A673 (cell line): ENCODE measurements at regions of chr3 and their contacts with region 1.

Region 1: GRCh38 chr3:177136741-177137140 is 60.5 kb downstream of the TBL1XR1 start:
- DNase-seq: no peak
- H3K4me3 ChIP-seq: no peak overlapping the region
- H3K27ac ChIP-seq: no peak overlapping the region
- H3K4me1 ChIP-seq: peaks cover 27% of the 10 kb centered on the region
- H3K27me3 ChIP-seq: no peaks in the 10 kb centered on the region
- CTCF ChIP-seq: no peak

Region 2: GRCh38 chr3:176755552-176755951 is 381.2 kb before region 1 on chr3:
- CTCF ChIA-PET with region 1: no interaction called
- POLR2A ChIA-PET with region 1: no interaction called
- intact Hi-C with region 1: no loop called
- DNase-seq: no peak
- H3K4me3 ChIP-seq: no peak overlapping the region
- H3K27ac ChIP-seq: no peak overlapping the region
- H3K4me1 ChIP-seq: no peaks in the 10 kb centered on the region
- H3K27me3 ChIP-seq: no peaks in the 10 kb centered on the region
- CTCF ChIP-seq: no peak

Region 3: DNA sequence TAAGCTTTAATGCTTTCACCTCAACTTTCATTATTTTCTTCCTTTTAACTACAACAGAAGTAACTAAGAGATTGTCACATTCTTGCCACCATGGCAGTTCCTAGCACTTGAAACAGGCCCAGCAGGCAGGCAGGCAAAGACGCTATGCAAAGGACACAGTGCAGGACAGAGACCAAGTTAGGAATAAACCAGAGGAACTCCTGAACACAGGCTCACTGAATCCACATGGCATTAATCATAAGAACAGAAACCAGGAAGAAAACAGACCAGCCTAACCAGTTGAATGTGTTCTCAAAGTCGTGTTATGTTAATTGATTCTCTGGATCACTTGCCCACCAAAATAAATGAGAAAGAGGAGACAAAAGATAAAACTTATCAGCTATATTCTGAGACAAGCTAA is 337.1 kb before region 1 on chr3:
- CTCF ChIA-PET with region 1: no interaction called
- POLR2A ChIA-PET with region 1: no interaction called
- intact Hi-C with region 1: no loop called
- DNase-seq: no peak
- H3K4me3 ChIP-seq: no peak overlapping the region
- H3K27ac ChIP-seq: no peak overlapping the region
- H3K4me1 ChIP-seq: peaks cover 23% of the 10 kb centered on the region
- H3K27me3 ChIP-seq: no peaks in the 10 kb centered on the region
- CTCF ChIP-seq: no peak

Region 4: DNA sequence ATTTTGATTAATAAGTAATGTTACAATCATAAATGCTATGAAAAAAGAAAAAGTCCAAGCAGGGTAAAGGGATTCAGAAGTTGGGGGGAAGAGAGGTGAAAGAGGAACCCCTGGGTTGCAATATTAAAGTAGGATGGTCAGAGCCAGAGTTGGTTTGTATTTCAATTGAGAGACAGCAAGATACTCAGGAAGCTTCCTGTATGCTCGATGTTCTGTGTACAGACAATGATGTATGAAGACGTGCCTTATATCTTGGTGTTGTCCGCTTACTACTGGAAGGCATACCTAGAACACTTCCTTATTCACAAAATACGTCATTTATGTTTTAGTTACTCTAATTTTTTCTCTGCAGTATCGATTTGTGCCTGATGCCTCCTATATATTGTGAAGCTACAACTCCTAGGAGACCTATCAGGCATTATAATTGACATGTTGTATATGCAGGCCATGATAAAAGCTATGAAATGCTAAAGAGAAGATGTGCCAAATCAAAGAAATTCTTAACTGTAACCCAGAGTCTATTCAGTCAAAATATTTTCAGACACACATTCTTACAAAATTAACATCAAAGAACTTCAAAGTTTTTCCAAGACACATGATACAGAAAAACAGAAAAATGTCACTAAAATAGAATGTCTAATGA is 26.9 kb before region 1 on chr3:
- CTCF ChIA-PET with region 1: no interaction called
- POLR2A ChIA-PET with region 1: no interaction called
- intact Hi-C with region 1: no loop called
- DNase-seq: no peak
- H3K4me3 ChIP-seq: no peak overlapping the region
- H3K27ac ChIP-seq: no peak overlapping the region
- H3K4me1 ChIP-seq: peaks cover 53% of the 10 kb centered on the region
- H3K27me3 ChIP-seq: no peaks in the 10 kb centered on the region
- CTCF ChIP-seq: no peak

Region 5: DNA sequence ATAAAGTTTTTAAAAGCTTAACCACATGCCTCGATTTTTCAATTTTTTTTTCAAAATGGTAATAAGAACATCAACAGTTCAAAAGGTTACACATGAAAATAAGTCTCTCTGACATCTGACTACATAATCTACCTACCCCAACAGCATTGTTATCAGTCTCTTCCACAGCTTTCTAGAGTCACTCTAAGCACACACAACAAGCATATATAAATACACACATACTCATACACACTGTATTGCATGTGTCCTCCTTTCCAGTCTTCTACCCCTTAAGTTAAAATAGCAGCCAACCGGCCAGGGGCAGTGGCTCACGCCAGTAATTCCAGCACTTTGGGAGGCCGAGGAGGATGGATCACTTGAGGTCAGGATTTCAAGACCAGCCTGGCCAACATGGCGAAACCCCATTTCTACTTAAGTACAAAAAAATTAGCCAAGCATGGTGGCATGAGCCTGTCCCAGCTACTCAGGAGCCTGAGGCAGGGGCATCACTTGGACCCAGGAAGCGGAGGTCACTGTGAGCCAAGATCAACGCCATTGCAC is 48.4 kb after region 1 on chr3:
- CTCF ChIA-PET with region 1: no interaction called
- POLR2A ChIA-PET with region 1: interaction called, 15 read pairs
- intact Hi-C with region 1: no loop called
- DNase-seq: no peak
- H3K4me3 ChIP-seq: no peak overlapping the region
- H3K27ac ChIP-seq: peak overlapping the region; percentile 17
- H3K4me1 ChIP-seq: peaks cover 11% of the 10 kb centered on the region
- H3K27me3 ChIP-seq: no peaks in the 10 kb centered on the region
- CTCF ChIP-seq: no peak